A673 (cell line): ENCODE measurements at regions of chr12 and their contacts with region 1.

Region 1: DNA sequence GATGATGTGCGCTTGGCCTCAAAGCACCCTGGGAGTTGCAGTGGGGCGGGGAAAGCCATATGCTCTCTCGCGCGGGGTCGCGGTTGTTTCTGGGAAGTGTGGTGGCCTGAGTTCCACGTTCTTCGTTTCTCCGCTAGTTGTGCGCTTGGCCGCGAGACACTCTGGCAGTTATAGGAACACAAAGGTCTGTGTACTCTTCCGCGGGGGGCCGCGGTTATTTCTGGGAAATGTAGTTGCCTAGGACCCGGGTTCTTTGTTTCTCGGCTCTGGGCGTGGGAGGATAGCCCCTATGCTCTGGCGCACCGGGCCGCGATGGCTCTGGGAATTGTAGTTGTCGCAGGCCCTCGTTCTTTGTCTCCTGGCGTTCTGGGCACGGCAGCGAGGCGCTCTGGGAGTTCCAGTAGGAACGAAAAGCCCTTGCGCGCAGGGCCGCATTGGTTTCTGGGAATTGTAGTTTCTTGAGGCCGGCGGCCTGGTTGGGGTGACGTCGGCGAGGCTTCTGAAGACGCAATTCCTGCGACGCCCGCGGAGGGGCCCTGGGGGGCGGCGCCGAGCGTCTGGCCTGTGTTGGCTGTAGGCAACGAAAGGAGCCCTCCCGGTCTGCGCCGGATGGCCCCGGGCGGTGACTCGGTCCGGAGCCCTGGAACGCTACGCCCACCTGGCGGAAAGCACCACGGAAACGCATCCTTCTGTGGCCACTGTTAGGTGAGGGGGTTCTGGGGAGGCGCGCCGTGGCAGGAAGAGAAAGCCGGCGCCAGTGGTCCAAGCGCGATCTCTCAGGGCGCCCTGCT is at the start of gene ZNF140:
- DNase-seq: peak; percentile 98
- H3K4me3 ChIP-seq: peak within 1 kb of the TSS; percentile 83
- H3K27ac ChIP-seq: peak within 1 kb of the TSS; percentile 98
- H3K4me1 ChIP-seq: no peaks in the 10 kb centered on the region
- H3K27me3 ChIP-seq: no peaks in the 10 kb centered on the region
- CTCF ChIP-seq: peak; percentile 27; the same call in 1 of the 2 replicates
- total RNA-seq, gene ZNF140: 14.9 and 16.7 TPM in 2 replicates

Region 2: DNA sequence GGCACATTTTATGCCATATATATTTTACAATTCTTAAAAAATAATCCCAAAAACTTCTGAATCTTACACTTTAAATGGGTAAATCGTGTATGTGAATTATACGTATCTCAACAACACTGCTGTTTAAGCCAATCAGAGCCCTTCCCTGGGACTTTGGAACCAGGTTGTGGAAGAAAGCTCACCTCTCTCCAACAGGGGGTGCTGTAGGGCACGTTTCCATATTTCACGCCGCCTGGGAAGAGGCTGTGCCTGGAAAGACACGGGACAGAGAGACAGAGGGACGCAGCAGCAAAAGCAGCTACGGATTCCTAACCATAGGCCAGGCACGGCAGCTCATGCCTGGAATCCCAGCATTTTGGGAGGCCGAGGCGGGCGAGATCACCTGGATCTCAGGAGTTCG is 620.0 kb before region 1 on chr12:
- CTCF ChIA-PET with region 1: no interaction called
- POLR2A ChIA-PET with region 1: no interaction called
- intact Hi-C with region 1: no loop called
- DNase-seq: peak; percentile 67
- H3K4me3 ChIP-seq: no peak overlapping the region
- H3K27ac ChIP-seq: no peak overlapping the region
- H3K4me1 ChIP-seq: peaks cover under 1% of the 10 kb centered on the region
- H3K27me3 ChIP-seq: no peaks in the 10 kb centered on the region
- CTCF ChIP-seq: peak; percentile 68

Region 3: GRCh38 chr12:133037207-133038005 is 43.2 kb before region 1 on chr12 and contains the start of gene ZNF84:
- CTCF ChIA-PET with region 1: no interaction called
- POLR2A ChIA-PET with region 1: no interaction called
- intact Hi-C with region 1: loop called (anchors 2 kb)
- DNase-seq: peak; percentile 98
- H3K4me3 ChIP-seq: peak within 1 kb of the TSS; percentile 68
- H3K27ac ChIP-seq: peak within 1 kb of the TSS; percentile 96
- H3K4me1 ChIP-seq: no peaks in the 10 kb centered on the region
- H3K27me3 ChIP-seq: no peaks in the 10 kb centered on the region
- CTCF ChIP-seq: no peak
- total RNA-seq, gene ZNF84: 35.5 and 40.4 TPM in 2 replicates

Region 4: GRCh38 chr12:133063556-133063955 is 17.0 kb before region 1 on chr12:
- CTCF ChIA-PET with region 1: no interaction called
- POLR2A ChIA-PET with region 1: no interaction called
- intact Hi-C with region 1: no loop called
- DNase-seq: no peak
- H3K4me3 ChIP-seq: no peak overlapping the region
- H3K27ac ChIP-seq: no peak overlapping the region
- H3K4me1 ChIP-seq: no peaks in the 10 kb centered on the region
- H3K27me3 ChIP-seq: no peaks in the 10 kb centered on the region
- CTCF ChIP-seq: no peak

Region 5: GRCh38 chr12:133130038-133130807 is 49.7 kb after region 1 on chr12 and contains the starts of genes ZNF10 and ZNF891:
- CTCF ChIA-PET with region 1: no interaction called
- POLR2A ChIA-PET with region 1: no interaction called
- intact Hi-C with region 1: loop called (anchors 2 kb)
- DNase-seq: peak; percentile 95
- H3K4me3 ChIP-seq: peak within 1 kb of the TSS; percentile 73
- H3K27ac ChIP-seq: peak within 1 kb of the TSS; percentile 91
- H3K4me1 ChIP-seq: no peaks in the 10 kb centered on the region
- H3K27me3 ChIP-seq: no peaks in the 10 kb centered on the region
- CTCF ChIP-seq: no peak
- total RNA-seq, gene ZNF10: 10.1 and 13.5 TPM in 2 replicates
- total RNA-seq, gene ZNF891: 2.9 TPM in 2 replicates

Region 6: GRCh38 chr12:133181238-133181959 is 100.8 kb after region 1 on chr12 and contains the start of gene ZNF268:
- CTCF ChIA-PET with region 1: no interaction called
- POLR2A ChIA-PET with region 1: no interaction called
- intact Hi-C with region 1: loop called (anchors 1 kb)
- DNase-seq: peak; percentile 93
- H3K4me3 ChIP-seq: peak within 1 kb of the TSS; percentile 99
- H3K27ac ChIP-seq: peak within 1 kb of the TSS; percentile 90
- H3K4me1 ChIP-seq: no peaks in the 10 kb centered on the region
- H3K27me3 ChIP-seq: no peaks in the 10 kb centered on the region
- CTCF ChIP-seq: peak; percentile 90
- total RNA-seq, gene ZNF268: 20.6 and 21.0 TPM in 2 replicates